Adrenal gland (tissue), 19 donors: ENCODE measurements at regions of chr3 and their contacts with region 1.

Region 1: DNA sequence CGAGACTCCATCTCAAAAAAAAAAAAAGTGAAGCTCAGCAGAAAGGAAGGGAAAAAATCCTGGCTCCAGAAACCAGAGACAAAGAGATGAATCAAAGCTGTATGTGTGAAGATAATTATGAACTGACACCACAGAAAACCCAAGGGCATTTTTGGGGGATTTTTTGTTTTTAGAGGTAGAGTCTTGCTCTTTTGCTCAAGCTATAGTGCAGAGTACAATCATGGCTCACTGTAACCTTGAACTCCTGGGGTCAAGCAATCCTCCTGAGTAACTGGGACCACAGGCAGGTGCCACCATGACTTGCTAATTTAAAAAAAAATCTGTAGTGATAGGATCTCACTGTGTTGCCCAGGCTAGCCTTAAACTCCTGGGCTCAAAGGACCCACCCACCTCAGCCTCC is 22.8 kb downstream of the HCLS1 start:
- DNase-seq: no peak
- H3K4me3 ChIP-seq: no peak overlapping the region
- H3K27ac ChIP-seq: no peak overlapping the region
- H3K4me1 ChIP-seq: no peaks in the 10 kb centered on the region
- H3K27me3 ChIP-seq: no peaks in the 10 kb centered on the region
- CTCF ChIP-seq: no peak
- POLR2A ChIP-seq: no peak

Region 2: GRCh38 chr3:121574449-121574848 is 63.5 kb before region 1 on chr3:
- intact Hi-C with region 1: loop called in 1 of 2 experiments (anchors 10 kb)
- DNase-seq: peak in 2 of 7 donors; percentile 27 to 28
- H3K4me3 ChIP-seq: no peak overlapping the region
- H3K27ac ChIP-seq: no peak overlapping the region
- H3K4me1 ChIP-seq: no peaks in the 10 kb centered on the region
- H3K27me3 ChIP-seq: no peaks in the 10 kb centered on the region
- CTCF ChIP-seq: no peak
- POLR2A ChIP-seq: no peak